PC-9 (cell line): ENCODE measurements at regions of chr22 and their contacts with region 1.

Region 1: DNA sequence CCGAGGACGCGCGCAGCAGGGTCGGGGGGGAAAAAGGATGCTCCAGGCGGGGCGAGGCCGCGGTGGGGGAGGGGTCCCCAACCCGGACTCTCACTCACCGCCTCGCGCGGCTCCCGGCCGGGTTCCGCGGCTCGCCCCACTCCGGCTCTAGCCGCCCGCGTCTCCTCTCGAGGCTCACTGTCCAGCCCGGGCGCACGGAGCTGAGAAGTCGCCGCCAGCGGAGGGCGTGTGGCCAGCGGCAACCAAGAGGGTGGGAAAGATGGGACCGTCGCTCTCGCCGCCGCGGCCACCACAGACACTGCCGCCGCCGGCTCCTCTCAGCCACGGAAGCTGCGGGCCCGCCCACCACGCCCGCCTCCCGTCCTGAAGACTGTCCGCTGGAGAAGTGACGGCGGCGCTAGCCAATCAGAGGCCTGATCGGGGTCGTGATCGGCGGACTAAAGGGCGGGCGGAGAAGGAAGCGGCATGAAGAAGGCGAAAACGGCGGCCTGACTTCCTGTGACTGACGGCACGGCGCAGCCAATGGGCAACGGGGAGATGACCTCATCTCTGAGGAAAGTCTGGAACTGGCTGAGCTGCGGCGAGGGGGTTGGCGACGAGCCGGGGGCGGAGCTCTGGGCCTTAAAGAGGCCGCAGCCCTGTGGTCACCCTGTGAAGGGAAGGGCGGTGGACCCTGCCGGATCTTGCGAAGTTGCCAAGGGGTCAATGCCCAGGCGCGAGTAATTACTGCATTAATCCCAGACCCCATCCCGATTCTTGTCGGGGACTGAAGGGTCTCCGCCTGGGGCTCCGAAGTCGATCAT is at the start of gene MRTFA:
- DNase-seq: peak; percentile 99
- H3K4me3 ChIP-seq: peak within 1 kb of the TSS; percentile 85
- H3K27ac ChIP-seq: no peak within 1 kb of the TSS
- H3K4me1 ChIP-seq: peaks cover 30% of the 10 kb centered on the region
- H3K27me3 ChIP-seq: no peaks in the 10 kb centered on the region
- CTCF ChIP-seq: no peak
- total RNA-seq, gene MRTFA: 44.7 and 64.6 TPM in 2 replicates

Region 2: GRCh38 chr22:40487663-40488249 is 148.8 kb before region 1 on chr22:
- CTCF ChIA-PET with region 1: no interaction called
- POLR2A ChIA-PET with region 1: interaction called, 3 read pairs
- intact Hi-C with region 1: loop called (anchors 2 kb)
- DNase-seq: peak in 1 of 2 experiments; percentile 52
- H3K4me3 ChIP-seq: no peak overlapping the region
- H3K27ac ChIP-seq: 0 out of 2 replicates have a peak overlapping the region, but pooled peaks have one; percentile 10
- H3K4me1 ChIP-seq: peaks cover 7% of the 10 kb centered on the region
- H3K27me3 ChIP-seq: no peaks in the 10 kb centered on the region
- CTCF ChIP-seq: peak; percentile 88

Region 3: GRCh38 chr22:40499187-40499753 is 137.3 kb before region 1 on chr22:
- CTCF ChIA-PET with region 1: no interaction called
- POLR2A ChIA-PET with region 1: interaction called, 4 read pairs
- intact Hi-C with region 1: loop called (anchors 2 kb)
- DNase-seq: peak; percentile 49 to 98
- H3K4me3 ChIP-seq: peak overlapping the region; percentile 31; the same call in 1 of the 2 replicates
- H3K27ac ChIP-seq: peak overlapping the region; percentile 96
- H3K4me1 ChIP-seq: peaks cover 40% of the 10 kb centered on the region
- H3K27me3 ChIP-seq: no peaks in the 10 kb centered on the region
- CTCF ChIP-seq: no peak

Region 4: DNA sequence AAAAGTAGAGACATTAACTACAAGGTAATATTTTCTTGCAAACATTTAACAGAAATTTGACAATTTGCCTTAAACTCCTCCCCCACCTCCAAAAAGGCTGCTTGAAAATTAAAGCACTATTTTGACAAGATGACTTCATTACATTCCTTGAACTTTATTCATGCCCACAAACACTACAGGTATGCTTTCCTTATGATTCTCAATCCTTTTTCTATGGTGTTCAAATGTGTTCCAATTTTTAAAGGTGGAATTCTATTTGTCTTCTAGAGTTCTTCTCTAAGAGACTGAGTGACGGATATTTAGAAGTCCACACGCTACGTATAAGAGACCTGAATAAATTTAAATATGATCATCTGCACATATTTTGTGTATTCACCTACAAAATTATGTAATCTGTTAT is 69.5 kb before region 1 on chr22:
- CTCF ChIA-PET with region 1: no interaction called
- POLR2A ChIA-PET with region 1: no interaction called
- intact Hi-C with region 1: loop called (anchors 1 kb)
- DNase-seq: peak in 1 of 2 experiments; percentile 66
- H3K4me3 ChIP-seq: no peak overlapping the region
- H3K27ac ChIP-seq: peak overlapping the region; percentile 44
- H3K4me1 ChIP-seq: peaks cover 27% of the 10 kb centered on the region
- H3K27me3 ChIP-seq: no peaks in the 10 kb centered on the region
- CTCF ChIP-seq: no peak

Region 5: GRCh38 chr22:40588726-40589125 is 47.9 kb before region 1 on chr22:
- CTCF ChIA-PET with region 1: no interaction called
- POLR2A ChIA-PET with region 1: no interaction called
- intact Hi-C with region 1: no loop called
- DNase-seq: peak; percentile 62 to 69
- H3K4me3 ChIP-seq: no peak overlapping the region
- H3K27ac ChIP-seq: peak overlapping the region; percentile 35
- H3K4me1 ChIP-seq: peaks cover 28% of the 10 kb centered on the region
- H3K27me3 ChIP-seq: no peaks in the 10 kb centered on the region
- CTCF ChIP-seq: no peak

Region 6: DNA sequence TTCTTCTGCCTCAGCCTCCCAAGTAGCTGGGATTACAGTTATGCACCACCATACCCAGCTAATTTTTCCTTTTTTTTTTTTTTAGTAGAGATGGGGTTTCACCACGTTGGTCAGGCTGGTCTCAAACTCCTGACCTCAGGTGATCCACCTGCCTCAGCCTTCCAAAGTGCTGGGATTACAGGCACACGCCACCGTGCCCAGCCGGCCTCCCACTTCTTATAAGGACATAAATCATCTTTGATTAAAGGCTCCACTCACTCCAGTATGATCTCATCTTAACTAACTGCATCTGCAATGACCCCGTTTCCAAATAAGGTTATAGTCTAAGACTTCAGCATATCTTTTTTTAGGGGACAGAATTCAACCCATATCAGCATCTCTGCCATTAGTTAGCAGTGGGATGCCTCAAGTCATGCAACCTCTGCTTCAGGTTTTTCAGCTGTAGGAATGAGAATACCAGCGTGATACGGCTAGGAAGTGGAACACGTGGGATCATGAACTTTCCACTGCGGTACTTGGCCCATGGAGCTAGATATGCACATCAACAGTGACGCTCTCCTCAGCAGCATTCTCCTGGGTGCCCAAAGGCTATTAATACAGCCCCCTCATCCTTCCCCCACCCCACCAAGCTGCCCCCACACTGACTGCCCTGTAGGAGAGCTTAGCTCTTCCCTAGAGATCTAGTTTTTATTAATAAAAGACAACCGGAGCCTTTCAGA is 84.1 kb after region 1 on chr22:
- CTCF ChIA-PET with region 1: interaction called, 15 read pairs
- POLR2A ChIA-PET with region 1: no interaction called
- intact Hi-C with region 1: no loop called
- DNase-seq: no peak
- H3K4me3 ChIP-seq: no peak overlapping the region
- H3K27ac ChIP-seq: no peak overlapping the region
- H3K4me1 ChIP-seq: peaks cover 25% of the 10 kb centered on the region
- H3K27me3 ChIP-seq: no peaks in the 10 kb centered on the region
- CTCF ChIP-seq: no peak